WTC11 (cell line): ENCODE measurements at regions of chr15 and their contacts with region 1.

Region 1: DNA sequence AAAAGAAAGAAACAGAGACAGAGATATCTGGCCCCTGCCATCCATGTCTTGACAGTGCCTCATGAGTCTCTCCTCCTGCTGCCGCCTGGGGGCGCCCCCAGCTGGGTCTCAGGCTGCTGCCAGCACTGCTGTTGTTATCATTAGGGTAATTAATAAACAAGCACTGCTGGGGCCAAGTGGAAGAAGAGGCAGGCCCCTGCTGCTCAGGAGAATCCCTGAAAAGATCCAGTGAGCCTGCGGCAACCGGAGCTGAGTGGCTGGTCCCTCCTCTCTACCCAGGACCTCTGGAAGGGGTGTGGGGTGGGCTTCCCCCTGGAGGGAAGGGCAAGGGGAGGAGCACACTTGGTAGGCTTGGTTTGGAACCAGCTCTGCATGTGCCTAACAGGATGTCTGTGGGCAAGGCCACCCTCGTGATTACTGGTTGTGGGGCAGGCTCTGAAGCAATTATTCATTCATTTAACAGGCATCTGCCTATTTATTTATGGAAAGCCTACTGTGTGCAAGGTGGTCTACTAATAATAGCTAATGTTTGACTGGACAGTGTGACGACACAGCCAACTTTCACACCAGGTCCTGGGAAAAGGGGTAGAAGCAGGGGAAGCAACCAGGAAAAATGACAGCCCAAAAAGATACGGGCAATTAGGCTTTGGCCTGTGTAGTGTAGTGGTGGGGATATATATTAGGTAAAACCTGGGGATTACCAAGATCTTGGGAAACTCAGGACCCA is 1.2 kb upstream of the TYRO3 start:
- DNase-seq: peak; percentile 76
- ATAC-seq: peak; percentile 75
- H3K4me3 Mint-ChIP-seq: peak overlapping the region; percentile 80
- H3K27ac Mint-ChIP-seq: peak overlapping the region; percentile 81
- H3K4me1 Mint-ChIP-seq: peaks cover 46% of the 10 kb centered on the region
- H3K27me3 Mint-ChIP-seq: no peaks in the 10 kb centered on the region; the same call in 1 of the 2 replicates
- CTCF ChIP-seq: peak; percentile 80

Region 2: GRCh38 chr15:41544650-41545015 is 13.2 kb before region 1 on chr15:
- CTCF ChIA-PET with region 1: interaction called, 24 read pairs
- POLR2A ChIA-PET with region 1: interaction called, 10 read pairs
- DNase-seq: no peak
- ATAC-seq: no peak
- H3K4me3 Mint-ChIP-seq: peak overlapping the region; percentile 98
- H3K27ac Mint-ChIP-seq: no peak overlapping the region
- H3K4me1 Mint-ChIP-seq: peaks cover 5% of the 10 kb centered on the region
- H3K27me3 Mint-ChIP-seq: peaks cover 3% of the 10 kb centered on the region; the same call in 1 of the 2 replicates
- CTCF ChIP-seq: no peak

Region 3: DNA sequence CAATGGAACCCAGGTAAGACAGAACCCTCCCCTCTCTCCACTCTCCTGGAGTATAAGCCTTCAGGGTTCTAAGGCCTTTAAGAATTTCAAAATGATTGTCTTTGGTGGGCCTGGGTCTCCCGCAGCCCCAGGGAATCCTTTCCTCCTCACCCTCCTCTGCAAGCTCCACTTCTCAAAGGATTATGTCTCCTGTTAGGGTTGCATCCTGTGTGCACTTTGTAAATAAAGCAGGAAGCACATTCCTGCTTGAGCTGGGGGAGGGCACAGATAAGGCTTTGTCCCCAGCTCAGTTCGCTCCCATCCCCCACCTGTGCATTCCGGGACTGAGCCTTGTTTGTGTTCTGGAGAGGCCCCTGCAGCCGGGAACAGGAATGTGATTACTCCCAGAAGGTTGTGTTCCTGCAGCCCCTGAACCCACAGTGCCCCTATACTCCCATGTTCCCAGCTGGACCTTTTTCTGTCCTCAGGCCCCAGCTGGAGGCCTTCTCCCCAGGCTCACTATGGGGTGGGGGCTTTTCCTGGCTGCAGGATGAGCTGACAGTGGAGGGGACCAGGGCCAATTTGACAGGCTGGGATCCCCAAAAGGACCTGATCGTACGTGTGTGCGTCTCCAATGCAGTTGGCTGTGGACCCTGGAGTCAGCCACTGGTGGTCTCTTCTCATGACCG is 10.6 kb after region 1 on chr15:
- CTCF ChIA-PET with region 1: interaction called, 27 read pairs
- POLR2A ChIA-PET with region 1: interaction called, 20 read pairs
- DNase-seq: peak; percentile 89
- ATAC-seq: peak; percentile 78
- H3K4me3 Mint-ChIP-seq: peak overlapping the region; percentile 41
- H3K27ac Mint-ChIP-seq: peak overlapping the region; percentile 95
- H3K4me1 Mint-ChIP-seq: peaks cover 62% of the 10 kb centered on the region
- H3K27me3 Mint-ChIP-seq: no peaks in the 10 kb centered on the region
- CTCF ChIP-seq: no peak

Region 4: DNA sequence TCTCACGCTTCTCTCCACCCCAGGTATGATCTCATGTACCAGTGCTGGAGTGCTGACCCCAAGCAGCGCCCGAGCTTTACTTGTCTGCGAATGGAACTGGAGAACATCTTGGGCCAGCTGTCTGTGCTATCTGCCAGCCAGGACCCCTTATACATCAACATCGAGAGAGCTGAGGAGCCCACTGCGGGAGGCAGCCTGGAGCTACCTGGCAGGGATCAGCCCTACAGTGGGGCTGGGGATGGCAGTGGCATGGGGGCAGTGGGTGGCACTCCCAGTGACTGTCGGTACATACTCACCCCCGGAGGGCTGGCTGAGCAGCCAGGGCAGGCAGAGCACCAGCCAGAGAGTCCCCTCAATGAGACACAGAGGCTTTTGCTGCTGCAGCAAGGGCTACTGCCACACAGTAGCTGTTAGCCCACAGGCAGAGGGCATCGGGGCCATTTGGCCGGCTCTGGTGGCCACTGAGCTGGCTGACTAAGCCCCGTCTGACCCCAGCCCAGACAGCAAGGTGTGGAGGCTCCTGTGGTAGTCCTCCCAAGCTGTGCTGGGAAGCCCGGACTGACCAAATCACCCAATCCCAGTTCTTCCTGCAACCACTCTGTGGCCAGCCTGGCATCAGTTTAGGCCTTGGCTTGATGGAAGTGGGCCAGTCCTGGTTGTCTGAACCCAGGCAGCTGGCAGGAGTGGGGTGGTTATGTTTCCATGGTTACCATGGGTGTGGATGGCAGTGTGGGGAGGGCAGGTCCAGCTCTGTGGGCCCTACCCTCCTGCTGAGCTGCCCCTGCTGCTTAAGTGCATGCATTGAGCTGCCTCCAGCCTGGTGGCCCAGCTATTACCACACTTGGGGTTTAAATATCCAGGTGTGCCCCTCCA is 20.3 kb after region 1 on chr15:
- CTCF ChIA-PET with region 1: interaction called, 121 read pairs
- POLR2A ChIA-PET with region 1: interaction called, 19 read pairs
- DNase-seq: no peak
- ATAC-seq: no peak
- H3K4me3 Mint-ChIP-seq: no peak overlapping the region
- H3K27ac Mint-ChIP-seq: peak overlapping the region; percentile 60; the same call in 1 of the 2 replicates
- H3K4me1 Mint-ChIP-seq: peaks cover 6% of the 10 kb centered on the region
- H3K27me3 Mint-ChIP-seq: no peaks in the 10 kb centered on the region
- CTCF ChIP-seq: no peak

Region 5: GRCh38 chr15:41585127-41586047 is 27.6 kb after region 1 on chr15:
- CTCF ChIA-PET with region 1: interaction called, 121 read pairs
- POLR2A ChIA-PET with region 1: interaction called, 19 read pairs
- DNase-seq: peak; percentile 35
- ATAC-seq: peak; percentile 67
- H3K4me3 Mint-ChIP-seq: peak overlapping the region; percentile 68
- H3K27ac Mint-ChIP-seq: no peak overlapping the region
- H3K4me1 Mint-ChIP-seq: peaks cover 16% of the 10 kb centered on the region
- H3K27me3 Mint-ChIP-seq: peaks cover 16% of the 10 kb centered on the region
- CTCF ChIP-seq: no peak

Region 6: GRCh38 chr15:41746802-41747201 is 189.0 kb after region 1 on chr15:
- CTCF ChIA-PET with region 1: no interaction called
- POLR2A ChIA-PET with region 1: no interaction called
- DNase-seq: no peak
- ATAC-seq: no peak
- H3K4me3 Mint-ChIP-seq: no peak overlapping the region
- H3K27ac Mint-ChIP-seq: no peak overlapping the region
- H3K4me1 Mint-ChIP-seq: no peaks in the 10 kb centered on the region
- H3K27me3 Mint-ChIP-seq: no peaks in the 10 kb centered on the region
- CTCF ChIP-seq: no peak